ENCODE measurements at regions of chr14 and their contacts with region 1.

Region 1: GRCh38 chr14:23327947-23328744 is 6.9 kb downstream of the PABPN1 start:
- DNase-seq: peak; percentile 72
- ATAC-seq: peak; percentile 64 to 68

Region 2: DNA sequence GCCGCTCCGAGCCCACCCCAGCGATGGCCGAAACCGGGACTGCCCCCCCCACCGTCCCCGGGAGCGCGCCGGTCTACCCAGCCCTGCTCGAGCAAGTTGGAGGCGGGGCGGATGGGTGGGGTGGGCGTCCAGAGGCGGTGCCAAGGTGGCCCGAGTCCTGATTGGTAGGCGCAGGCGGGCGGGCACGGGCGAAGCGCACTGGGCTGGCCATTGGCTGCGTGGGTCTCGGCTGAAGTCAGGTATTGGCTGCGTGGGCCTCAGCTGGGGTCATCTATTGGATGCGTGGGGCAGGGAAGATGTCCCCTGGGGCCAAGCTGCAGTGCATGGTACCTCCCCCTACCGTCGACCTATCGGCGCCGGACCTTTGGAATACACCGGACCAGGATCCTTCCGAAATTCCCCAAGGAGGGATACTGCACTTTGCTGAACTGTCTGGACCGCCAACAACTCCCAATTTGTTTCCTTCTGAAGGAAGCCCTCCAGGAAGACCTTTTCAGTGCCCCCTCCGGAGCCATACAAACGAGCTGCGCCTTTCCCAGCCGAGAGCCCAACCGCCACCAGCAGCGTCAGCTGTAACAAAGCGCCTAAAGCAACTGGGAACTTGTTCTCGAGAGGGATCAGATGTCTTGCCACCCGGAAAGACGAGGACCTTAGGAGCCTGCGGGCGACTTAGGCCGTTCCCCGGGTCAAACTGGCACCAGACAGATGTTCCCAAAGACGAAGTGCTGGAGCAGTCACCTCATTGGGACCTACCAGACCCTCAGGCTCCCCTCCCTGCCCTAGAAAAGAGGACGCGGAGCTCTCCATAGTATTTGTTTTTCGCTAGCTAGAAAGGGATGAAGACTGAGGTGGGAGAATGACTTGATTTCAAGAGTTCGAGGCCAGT is 41.9 kb before region 1 on chr14 and contains the start of gene HOMEZ:
- intact Hi-C with region 1: no loop called
- DNase-seq: peak; percentile 99
- ATAC-seq: peak; percentile 98 to 99
- total RNA-seq, gene HOMEZ: 8.3 to 8.5 TPM

Region 3: DNA sequence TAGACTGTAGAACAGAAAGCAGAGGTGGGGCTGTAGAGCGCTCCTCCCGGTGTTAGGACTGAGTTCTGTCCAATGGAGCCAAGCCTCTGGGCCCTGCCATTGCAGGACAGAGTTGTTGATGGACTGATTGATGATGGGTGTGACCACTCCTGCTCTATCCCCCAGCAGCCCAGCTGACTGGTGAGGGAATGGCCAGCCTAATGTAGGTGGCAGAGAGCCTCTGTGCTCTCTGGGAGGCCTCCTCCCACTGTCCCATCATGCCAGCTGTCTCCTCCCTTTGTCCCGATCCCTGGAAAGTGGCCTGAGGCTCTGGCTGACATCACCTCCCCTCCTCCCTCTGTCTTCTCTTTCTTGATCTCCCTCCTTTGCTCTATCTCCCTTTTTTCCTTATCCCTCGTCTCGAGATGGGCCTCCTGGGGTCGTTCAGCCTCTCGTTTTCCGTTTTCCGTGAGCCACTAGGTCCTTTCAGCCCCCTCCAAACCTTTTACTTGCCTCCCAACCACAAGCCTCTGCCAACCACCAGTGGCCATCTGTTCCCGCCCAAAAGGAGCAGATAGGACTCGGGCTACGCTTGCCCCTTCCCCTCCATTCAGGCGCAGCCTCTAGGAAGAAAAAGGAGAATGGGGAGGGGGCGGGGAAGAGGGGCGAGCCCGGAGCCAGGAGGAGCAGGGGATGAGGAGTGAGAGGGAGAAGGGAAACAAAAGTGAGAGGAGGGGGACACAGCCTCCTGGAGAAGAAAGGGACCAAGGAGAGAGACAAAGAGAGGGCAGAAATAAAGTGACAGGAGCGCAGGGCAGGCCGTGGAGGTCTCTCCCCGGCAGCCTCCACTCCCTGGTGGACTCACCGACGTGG is 36.2 kb after region 1 on chr14:
- intact Hi-C with region 1: loop called in 1 of 2 experiments (anchors 5 kb)
- DNase-seq: no peak
- ATAC-seq: peak; percentile 7 to 41

Region 4: DNA sequence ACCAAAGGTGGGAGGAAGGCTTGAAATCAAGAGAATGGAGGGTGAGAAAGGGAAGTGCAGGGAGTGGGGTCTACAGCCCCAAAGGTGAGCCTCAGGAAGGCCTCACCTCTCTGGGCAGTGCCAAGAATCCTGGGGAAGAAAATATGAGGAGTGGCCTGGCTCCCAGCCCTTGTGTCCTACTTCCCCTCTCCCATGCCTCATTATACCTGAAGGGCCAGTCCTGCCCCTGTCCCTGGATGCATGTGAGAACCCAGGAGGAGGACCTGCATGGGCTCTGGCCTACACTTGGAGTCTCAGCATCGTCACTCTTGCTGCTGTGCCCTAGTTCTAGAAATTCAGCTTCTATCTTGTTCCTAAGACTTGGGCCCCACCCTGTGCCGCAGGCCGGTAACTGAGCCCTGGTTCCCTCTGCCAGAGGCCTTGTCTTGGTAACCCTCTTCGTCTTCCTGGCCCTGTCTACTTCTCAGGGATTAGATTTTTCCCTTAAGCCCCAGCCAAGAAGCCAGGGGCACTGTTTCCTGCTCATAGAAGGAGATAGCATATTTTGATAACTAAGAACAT is 118.2 kb after region 1 on chr14:
- intact Hi-C with region 1: loop called (anchors 2 to 10 kb)
- DNase-seq: peak; percentile 48
- ATAC-seq: peak; percentile 39 to 59

Measured in left cardiac atrium (tissue), 4 donors.